Gastrocnemius medialis (tissue), 4 donors: ENCODE measurements at regions of chr2 and their contacts with region 1.

Region 1: DNA sequence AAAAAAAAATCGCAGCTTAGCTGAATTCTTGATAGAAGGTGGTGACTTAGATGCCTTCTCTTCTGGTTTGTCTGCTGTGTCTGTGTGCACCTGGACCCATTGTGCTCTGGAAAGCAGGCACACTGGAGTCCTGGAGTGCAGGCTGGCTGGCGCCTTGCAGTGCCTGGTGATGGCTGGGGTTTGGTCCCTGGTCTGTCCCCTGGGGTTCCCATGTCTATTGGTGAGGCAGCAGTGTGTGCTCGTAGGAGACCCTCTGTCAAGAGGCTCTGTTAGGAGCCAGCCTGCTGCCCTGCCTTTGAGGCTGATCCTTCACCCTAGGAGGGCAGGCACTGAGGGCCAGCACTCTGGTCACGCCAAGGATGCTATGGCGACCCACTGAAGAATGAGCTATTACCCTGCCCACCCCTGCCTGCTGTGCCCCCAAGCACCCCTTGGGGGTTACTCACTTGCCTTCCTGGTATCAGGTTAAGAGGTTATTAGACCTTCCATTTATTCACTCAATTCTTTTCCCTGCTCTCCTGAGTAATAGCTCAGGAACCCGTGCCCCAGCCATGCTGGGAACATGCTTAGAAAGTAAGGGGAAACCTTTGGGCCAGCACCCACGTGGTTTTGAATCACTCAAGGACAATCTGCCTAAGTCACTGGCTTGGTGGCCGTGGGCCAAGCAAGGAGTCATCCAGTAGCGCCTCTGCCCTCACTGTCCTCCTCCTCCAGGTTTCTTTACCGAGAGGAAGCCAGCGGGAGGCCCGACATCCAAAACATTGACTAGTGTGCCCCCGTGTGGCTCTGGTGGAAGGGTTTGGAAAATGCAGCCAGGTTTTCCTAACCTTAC is 284.5 kb downstream of the PRKCE start:
- DNase-seq: peak; percentile 99 to 100
- ATAC-seq: peak; percentile 94
- H3K4me3 ChIP-seq: no peak overlapping the region
- H3K27ac ChIP-seq: peak overlapping the region; percentile 82 to 89 (median 86)
- H3K4me1 ChIP-seq: peaks cover 22 to 35% of the 10 kb centered on the region in 2 donors
- H3K27me3 ChIP-seq: no peaks in the 10 kb centered on the region
- CTCF ChIP-seq: peak; percentile 77 to 87 (median 80)
- POLR2A ChIP-seq: no peak

Region 2: DNA sequence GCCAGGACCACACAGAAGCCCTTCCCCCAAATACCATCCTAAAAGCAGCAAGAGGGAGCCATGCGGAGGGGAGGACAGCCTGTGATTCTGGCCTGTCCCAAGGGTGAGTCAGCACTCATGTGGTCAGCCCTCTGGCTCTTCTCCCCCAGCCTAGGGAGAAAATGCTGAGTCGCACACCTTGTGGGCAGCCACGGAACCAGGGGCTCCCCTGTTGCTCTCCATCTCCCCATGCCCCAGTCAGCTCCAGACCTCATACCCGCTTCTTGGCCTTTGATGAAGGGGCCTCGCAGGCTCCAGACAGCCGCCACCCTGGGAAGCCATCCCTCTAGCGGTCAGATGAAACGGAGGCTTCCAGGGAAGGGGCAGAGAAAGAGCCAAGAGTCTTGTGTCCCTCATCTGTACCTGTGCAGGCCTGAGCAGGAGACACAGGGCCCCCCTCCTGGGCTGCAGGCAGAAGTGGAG is 745.5 kb before region 1 on chr2:
- in situ Hi-C with region 1: no loop called
- intact Hi-C with region 1: no loop called
- DNase-seq: no peak
- ATAC-seq: peak; percentile 64 to 67
- H3K4me3 ChIP-seq: no peak overlapping the region
- H3K27ac ChIP-seq: no peak overlapping the region
- H3K4me1 ChIP-seq: peaks cover 0 to 12% of the 10 kb centered on the region in 2 donors
- H3K27me3 ChIP-seq: peaks cover 0 to 4% (median 0%) of the 10 kb centered on the region in 3 donors
- CTCF ChIP-seq: no peak
- POLR2A ChIP-seq: no peak

Region 3: GRCh38 chr2:45643543-45644542 is 292.2 kb before region 1 on chr2:
- in situ Hi-C with region 1: loop called (anchors 5 kb)
- intact Hi-C with region 1: loop called (anchors 1 kb)
- DNase-seq: peak; percentile 18 to 47
- ATAC-seq: peak; percentile 84 to 93
- H3K4me3 ChIP-seq: peak overlapping the region; percentile 46 to 70 (median 52)
- H3K27ac ChIP-seq: no peak overlapping the region
- H3K4me1 ChIP-seq: peaks cover 5 to 9% of the 10 kb centered on the region in 2 donors
- H3K27me3 ChIP-seq: peaks cover 0 to 7% (median 0%) of the 10 kb centered on the region in 3 donors
- CTCF ChIP-seq: peak; percentile 89 to 100 (median 99)
- POLR2A ChIP-seq: no peak

Region 4: GRCh38 chr2:45691171-45691999 is 244.6 kb before region 1 on chr2:
- in situ Hi-C with region 1: no loop called
- intact Hi-C with region 1: loop called (anchors 5 kb)
- DNase-seq: peak; percentile 78 to 87
- ATAC-seq: peak; percentile 98 to 99
- H3K4me3 ChIP-seq: peak overlapping the region in 2 of 4 donors; percentile 14 to 25
- H3K27ac ChIP-seq: peak overlapping the region; percentile 81 to 89 (median 82)
- H3K4me1 ChIP-seq: peaks cover 23 to 26% of the 10 kb centered on the region in 2 donors
- H3K27me3 ChIP-seq: no peaks in the 10 kb centered on the region
- CTCF ChIP-seq: no peak
- POLR2A ChIP-seq: peak; percentile 16 to 21

Region 5: GRCh38 chr2:45778720-45779171 is 157.3 kb before region 1 on chr2:
- in situ Hi-C with region 1: loop called (anchors 5 to 25 kb)
- intact Hi-C with region 1: loop called (anchors 1 kb)
- DNase-seq: peak; percentile 40 to 60
- ATAC-seq: peak; percentile 75 to 85
- H3K4me3 ChIP-seq: no peak overlapping the region
- H3K27ac ChIP-seq: no peak overlapping the region
- H3K4me1 ChIP-seq: peaks cover 10 to 13% of the 10 kb centered on the region in 2 donors
- H3K27me3 ChIP-seq: no peaks in the 10 kb centered on the region
- CTCF ChIP-seq: peak; percentile 81 to 93 (median 85)
- POLR2A ChIP-seq: no peak

Region 6: DNA sequence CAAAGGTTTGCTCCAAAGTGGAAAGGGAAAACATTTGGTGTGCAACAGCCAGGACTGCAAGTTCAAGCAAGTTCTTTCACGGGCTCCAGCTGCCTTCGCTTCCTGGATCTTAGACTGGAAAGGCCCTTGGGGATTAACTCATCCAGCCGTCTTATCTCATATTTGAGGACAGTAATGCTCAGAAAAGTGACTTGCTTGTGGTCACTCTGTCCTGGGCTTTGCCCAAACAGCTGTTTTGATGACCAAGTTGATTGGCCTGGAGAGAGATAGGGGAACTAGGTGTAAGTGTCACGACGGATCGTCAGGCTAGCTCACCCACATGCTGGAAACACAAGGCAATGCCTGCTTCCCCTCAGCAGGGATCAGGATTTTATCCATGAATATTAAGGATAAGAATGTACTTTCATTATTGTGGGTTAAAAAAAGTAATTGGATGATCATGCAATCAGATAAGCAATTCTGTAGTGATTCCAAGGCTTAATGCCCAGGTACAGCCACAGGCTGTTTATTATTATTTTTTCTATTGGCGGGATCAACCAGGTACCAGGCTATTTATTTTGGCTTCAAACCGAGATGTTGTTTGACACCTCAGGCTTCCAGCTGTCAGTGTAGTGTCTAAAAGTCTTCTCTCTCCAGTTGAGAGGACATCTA is 198.6 kb after region 1 on chr2:
- in situ Hi-C with region 1: no loop called
- intact Hi-C with region 1: no loop called
- DNase-seq: peak in 1 of 2 donors; percentile 33
- ATAC-seq: peak; percentile 39 to 71
- H3K4me3 ChIP-seq: no peak overlapping the region
- H3K27ac ChIP-seq: peak overlapping the region in 3 of 4 donors; percentile 16 to 62 (median 57)
- H3K4me1 ChIP-seq: peaks cover 19 to 20% of the 10 kb centered on the region in 2 donors
- H3K27me3 ChIP-seq: no peaks in the 10 kb centered on the region
- CTCF ChIP-seq: no peak
- POLR2A ChIP-seq: no peak